HepG2 (cell line): ENCODE measurements at regions of chr3 and their contacts with region 1.

Region 1: GRCh38 chr3:5187156-5187919 is at the start of gene EDEM1:
- DNase-seq: peak; percentile 88
- ATAC-seq: peak; percentile 96
- H3K4me3 ChIP-seq: peak within 1 kb of the TSS; percentile 76 to 99 (median 90)
- H3K27ac ChIP-seq: peak within 1 kb of the TSS; percentile 89
- H3K4me1 ChIP-seq: peaks cover 41% of the 10 kb centered on the region
- H3K27me3 ChIP-seq: no peaks in the 10 kb centered on the region; a peak in 1 of 5 replicates
- CTCF ChIP-seq: no peak
- EP300 ChIP-seq: no peak
- POLR2A ChIP-seq: peak; percentile 72 to 90
- RAD21 ChIP-seq: peak; percentile 47; the same call in 1 of the 2 replicates
- total RNA-seq, gene EDEM1: 13.8 and 14.3 TPM in 2 replicates

Region 2: DNA sequence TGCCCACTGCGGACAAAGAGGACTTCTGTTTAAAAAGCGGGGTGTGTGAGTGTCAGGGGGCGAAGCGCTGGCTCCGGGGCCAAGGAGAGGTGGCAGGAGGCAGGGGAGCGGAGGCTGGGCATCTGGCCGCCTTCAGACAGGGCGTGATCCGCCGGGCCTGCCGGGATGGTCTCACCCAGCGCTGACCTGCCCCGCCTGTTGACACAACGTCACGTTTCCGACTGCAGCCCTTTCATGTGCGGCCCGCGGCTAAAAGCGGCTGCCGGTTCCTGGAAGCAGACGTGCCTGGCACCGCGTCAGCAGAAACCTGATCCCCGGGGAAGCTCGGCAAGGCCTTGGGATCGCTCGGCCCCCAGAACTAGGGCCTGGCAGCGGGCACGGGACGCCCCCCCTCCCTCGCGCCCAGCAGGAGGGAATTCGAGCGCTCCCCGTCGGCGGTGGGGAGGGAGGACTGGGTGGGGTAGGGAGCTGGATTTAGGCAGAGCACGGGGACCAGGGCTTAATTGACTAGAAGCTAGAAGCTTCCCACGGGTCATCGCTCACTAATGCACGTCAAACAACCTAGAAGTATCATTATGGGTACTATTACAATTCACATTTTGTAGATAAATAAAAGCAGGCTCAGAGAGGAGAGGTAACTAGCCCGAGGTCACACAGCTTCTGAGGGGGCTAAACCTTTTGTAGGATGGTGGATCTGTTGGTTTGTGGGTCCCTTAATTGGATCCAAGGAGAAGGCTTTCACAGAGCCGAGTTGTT is 200.4 kb before region 1 on chr3:
- CTCF ChIA-PET with region 1: no interaction called
- POLR2A ChIA-PET with region 1: no interaction called
- in situ Hi-C with region 1: no loop called
- intact Hi-C with region 1: loop called (anchors 10 kb)
- DNase-seq: peak; percentile 94
- ATAC-seq: peak; percentile 91
- H3K4me3 ChIP-seq: peak overlapping the region; percentile 33 to 54 (median 40); a peak in 5 of 6 replicates
- H3K27ac ChIP-seq: peak overlapping the region; percentile 66
- H3K4me1 ChIP-seq: peaks cover 66% of the 10 kb centered on the region
- H3K27me3 ChIP-seq: no peaks in the 10 kb centered on the region
- CTCF ChIP-seq: peak; percentile 63
- EP300 ChIP-seq: peak; percentile 89 to 95; a peak in 3 of 4 replicates
- POLR2A ChIP-seq: 0 out of 4 replicates have a peak, but pooled peaks of 1 of the 2 experiments have one; percentile 16
- RAD21 ChIP-seq: peak; percentile 17; the same call in 1 of the 2 replicates

Region 3: GRCh38 chr3:5122030-5122740 is 65.2 kb before region 1 on chr3 and contains the start of gene ARL8B:
- CTCF ChIA-PET with region 1: no interaction called
- POLR2A ChIA-PET with region 1: interaction called, 3 read pairs
- in situ Hi-C with region 1: loop called (anchors 5 kb)
- intact Hi-C with region 1: loop called (anchors 2 kb)
- DNase-seq: peak; percentile 65
- ATAC-seq: peak; percentile 96
- H3K4me3 ChIP-seq: peak within 1 kb of the TSS; percentile 85 to 92 (median 91)
- H3K27ac ChIP-seq: peak within 1 kb of the TSS; percentile 82
- H3K4me1 ChIP-seq: peaks cover 32% of the 10 kb centered on the region
- H3K27me3 ChIP-seq: no peaks in the 10 kb centered on the region; a peak in 1 of 5 replicates
- CTCF ChIP-seq: peak; percentile 92
- EP300 ChIP-seq: peak in 1 of 2 experiments; percentile 61; a peak in 1 of 4 replicates
- POLR2A ChIP-seq: peak; percentile 79 to 92
- RAD21 ChIP-seq: peak; percentile 62
- total RNA-seq, gene ARL8B: 30.4 and 33.1 TPM in 2 replicates

Region 4: GRCh38 chr3:5136919-5137429 is 50.4 kb before region 1 on chr3:
- CTCF ChIA-PET with region 1: no interaction called
- POLR2A ChIA-PET with region 1: interaction called, 20 read pairs
- in situ Hi-C with region 1: no loop called
- intact Hi-C with region 1: loop called (anchors 1 kb)
- DNase-seq: no peak
- ATAC-seq: no peak
- H3K4me3 ChIP-seq: no peak overlapping the region
- H3K27ac ChIP-seq: peak overlapping the region; percentile 81
- H3K4me1 ChIP-seq: peaks cover 62% of the 10 kb centered on the region
- H3K27me3 ChIP-seq: no peaks in the 10 kb centered on the region
- CTCF ChIP-seq: no peak
- EP300 ChIP-seq: no peak
- POLR2A ChIP-seq: no peak
- RAD21 ChIP-seq: no peak

Region 5: GRCh38 chr3:5197470-5198312 is 10.4 kb after region 1 on chr3:
- CTCF ChIA-PET with region 1: no interaction called
- POLR2A ChIA-PET with region 1: interaction called, 15 read pairs
- in situ Hi-C with region 1: no loop called
- intact Hi-C with region 1: no loop called
- DNase-seq: no peak
- ATAC-seq: no peak; the same call in 2 of the 3 replicates
- H3K4me3 ChIP-seq: no peak overlapping the region
- H3K27ac ChIP-seq: peak overlapping the region; percentile 21
- H3K4me1 ChIP-seq: peaks cover 51% of the 10 kb centered on the region
- H3K27me3 ChIP-seq: no peaks in the 10 kb centered on the region
- CTCF ChIP-seq: no peak
- EP300 ChIP-seq: no peak
- POLR2A ChIP-seq: no peak
- RAD21 ChIP-seq: no peak